HepG2 (cell line): ENCODE measurements at regions of chr11 and their contacts with region 1.

Region 1: GRCh38 chr11:13140028-13140870 is 131.1 kb downstream of the RASSF10 start:
- DNase-seq: peak; percentile 100
- ATAC-seq: peak; percentile 91
- H3K4me3 ChIP-seq: peak overlapping the region in 1 of 3 experiments; percentile 53; a peak in 2 of 6 replicates
- H3K27ac ChIP-seq: peak overlapping the region; percentile 99
- H3K4me1 ChIP-seq: peaks cover 93% of the 10 kb centered on the region
- H3K27me3 ChIP-seq: no peaks in the 10 kb centered on the region
- CTCF ChIP-seq: 0 out of 2 replicates have a peak, but pooled peaks have one; percentile 10
- EP300 ChIP-seq: peak; percentile 67 to 96; a peak in 3 of 4 replicates
- POLR2A ChIP-seq: peak; percentile 76 to 90
- RAD21 ChIP-seq: no peak; the same call in none of the 2 replicates

Region 2: DNA sequence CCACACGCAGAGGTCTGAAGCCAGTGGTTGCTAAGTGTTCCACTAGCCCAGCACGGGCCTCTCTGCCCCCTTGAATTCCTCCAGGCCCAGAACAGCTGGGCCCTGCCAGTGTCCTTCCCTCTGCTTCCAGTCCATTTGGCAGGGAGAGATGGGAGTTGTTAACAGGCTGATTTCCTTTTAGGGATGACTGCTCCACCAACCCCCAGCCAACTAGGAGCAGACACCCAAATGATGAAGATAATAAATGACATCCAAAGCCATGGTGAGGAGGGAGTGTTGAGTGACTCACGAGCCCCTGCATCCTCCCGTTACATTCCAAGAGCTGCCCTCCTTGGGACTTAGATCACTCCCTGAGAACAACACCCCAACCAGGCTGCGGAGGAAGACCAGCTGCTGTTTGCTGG is 742.3 kb before region 1 on chr11:
- CTCF ChIA-PET with region 1: no interaction called
- POLR2A ChIA-PET with region 1: no interaction called
- in situ Hi-C with region 1: no loop called
- intact Hi-C with region 1: no loop called
- DNase-seq: no peak
- ATAC-seq: no peak
- H3K4me3 ChIP-seq: no peak overlapping the region
- H3K27ac ChIP-seq: no peak overlapping the region
- H3K4me1 ChIP-seq: peaks cover 2% of the 10 kb centered on the region; the same call in 1 of the 2 replicates
- H3K27me3 ChIP-seq: no peaks in the 10 kb centered on the region
- CTCF ChIP-seq: no peak
- EP300 ChIP-seq: no peak
- POLR2A ChIP-seq: no peak
- RAD21 ChIP-seq: no peak

Region 3: GRCh38 chr11:13016415-13016814 is 123.8 kb before region 1 on chr11:
- CTCF ChIA-PET with region 1: no interaction called
- POLR2A ChIA-PET with region 1: interaction called, 4 read pairs
- in situ Hi-C with region 1: no loop called
- intact Hi-C with region 1: loop called (anchors 2 kb)
- DNase-seq: no peak
- ATAC-seq: no peak
- H3K4me3 ChIP-seq: no peak overlapping the region
- H3K27ac ChIP-seq: no peak overlapping the region
- H3K4me1 ChIP-seq: peaks cover 32% of the 10 kb centered on the region
- H3K27me3 ChIP-seq: no peaks in the 10 kb centered on the region; a peak in 1 of 5 replicates
- CTCF ChIP-seq: peak; percentile 28; the same call in 1 of the 2 replicates
- EP300 ChIP-seq: no peak
- POLR2A ChIP-seq: no peak
- RAD21 ChIP-seq: no peak

Region 4: GRCh38 chr11:13026722-13027121 is 113.5 kb before region 1 on chr11:
- CTCF ChIA-PET with region 1: no interaction called
- POLR2A ChIA-PET with region 1: no interaction called
- in situ Hi-C with region 1: no loop called
- intact Hi-C with region 1: no loop called
- DNase-seq: no peak
- ATAC-seq: no peak
- H3K4me3 ChIP-seq: no peak overlapping the region
- H3K27ac ChIP-seq: no peak overlapping the region
- H3K4me1 ChIP-seq: peaks cover 15% of the 10 kb centered on the region
- H3K27me3 ChIP-seq: peaks cover 0 to 20% of the 10 kb centered on the region in 2 experiments; a peak in 3 of 5 replicates
- CTCF ChIP-seq: no peak
- EP300 ChIP-seq: no peak
- POLR2A ChIP-seq: no peak
- RAD21 ChIP-seq: no peak

Region 5: DNA sequence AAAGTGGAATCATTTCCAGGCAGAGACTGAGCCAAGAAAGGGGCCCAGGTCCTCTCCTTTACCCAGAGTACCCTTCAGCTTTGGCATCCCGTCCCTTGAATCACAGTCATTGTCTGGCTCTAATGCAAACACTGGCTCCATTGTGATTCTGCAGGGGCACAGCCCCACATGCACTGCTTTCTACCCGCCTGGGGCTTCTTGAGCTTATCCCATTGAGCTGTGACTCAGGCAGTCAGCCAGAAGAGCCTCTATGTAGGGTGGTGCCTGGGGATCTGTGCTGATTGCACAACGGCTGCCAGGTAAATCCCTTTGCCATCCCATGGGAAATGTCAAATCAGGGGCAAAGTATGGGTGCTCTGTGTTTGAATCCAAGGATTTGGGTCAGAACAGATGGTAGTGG is 42.2 kb before region 1 on chr11:
- CTCF ChIA-PET with region 1: no interaction called
- POLR2A ChIA-PET with region 1: no interaction called
- in situ Hi-C with region 1: no loop called
- intact Hi-C with region 1: loop called (anchors 10 kb)
- DNase-seq: peak; percentile 42
- ATAC-seq: peak; percentile 55; the same call in 2 of the 3 replicates
- H3K4me3 ChIP-seq: no peak overlapping the region
- H3K27ac ChIP-seq: no peak overlapping the region
- H3K4me1 ChIP-seq: peaks cover 23% of the 10 kb centered on the region; the same call in 1 of the 2 replicates
- H3K27me3 ChIP-seq: no peaks in the 10 kb centered on the region; a peak in 1 of 5 replicates
- CTCF ChIP-seq: no peak
- EP300 ChIP-seq: no peak
- POLR2A ChIP-seq: no peak
- RAD21 ChIP-seq: no peak

Region 6: GRCh38 chr11:13114566-13115379 is 25.5 kb before region 1 on chr11:
- CTCF ChIA-PET with region 1: no interaction called
- POLR2A ChIA-PET with region 1: interaction called, 25 read pairs
- in situ Hi-C with region 1: no loop called
- intact Hi-C with region 1: loop called (anchors 2 kb)
- DNase-seq: peak; percentile 94
- ATAC-seq: peak; percentile 100
- H3K4me3 ChIP-seq: peak overlapping the region in 2 of 3 experiments; percentile 5 to 47; a peak in 3 of 6 replicates
- H3K27ac ChIP-seq: peak overlapping the region; percentile 73
- H3K4me1 ChIP-seq: peaks cover 62% of the 10 kb centered on the region
- H3K27me3 ChIP-seq: no peaks in the 10 kb centered on the region
- CTCF ChIP-seq: peak; percentile 94
- EP300 ChIP-seq: peak; percentile 16 to 19; a peak in 1 of 4 replicates
- POLR2A ChIP-seq: no peak
- RAD21 ChIP-seq: peak; percentile 73

Region 7: DNA sequence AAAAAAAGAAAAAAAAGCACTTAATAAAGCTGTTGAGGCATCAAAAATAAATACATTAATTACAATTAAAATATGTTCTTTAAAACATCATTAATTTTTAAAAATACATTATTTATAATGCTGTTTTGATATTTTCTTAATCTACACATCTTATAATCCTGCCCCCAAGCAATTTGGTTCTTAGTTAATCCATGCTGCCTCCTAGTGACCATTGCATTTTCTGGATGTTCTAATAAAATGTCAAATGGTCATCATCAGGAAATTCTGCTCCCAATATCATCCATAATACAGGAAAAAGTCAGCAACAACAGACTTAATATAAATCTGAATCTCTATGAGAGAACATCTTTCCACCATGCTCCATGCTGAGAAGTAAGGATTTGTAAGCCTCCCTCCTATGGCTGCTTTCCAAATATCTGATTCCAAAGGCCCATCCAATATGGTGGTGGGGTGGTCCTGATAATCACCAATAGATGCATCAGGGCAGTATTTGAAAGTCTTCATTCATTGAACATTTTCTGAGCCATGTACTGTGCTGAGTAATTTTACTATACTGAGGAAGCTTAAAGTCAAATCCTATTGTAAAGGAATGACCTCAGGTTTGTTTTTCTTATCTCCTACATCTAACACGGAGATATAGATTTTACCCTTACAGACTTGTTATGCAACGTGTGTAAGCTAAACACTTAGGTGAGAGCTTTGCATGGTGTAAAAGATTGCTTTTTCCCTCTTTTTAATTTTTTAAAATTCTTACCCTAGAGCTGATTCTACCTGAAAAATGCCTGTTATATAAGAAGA is 12.7 kb after region 1 on chr11:
- CTCF ChIA-PET with region 1: no interaction called
- POLR2A ChIA-PET with region 1: interaction called, 21 read pairs
- in situ Hi-C with region 1: no loop called
- intact Hi-C with region 1: no loop called
- DNase-seq: peak; percentile 25
- ATAC-seq: no peak
- H3K4me3 ChIP-seq: no peak overlapping the region
- H3K27ac ChIP-seq: no peak overlapping the region
- H3K4me1 ChIP-seq: peaks cover 55% of the 10 kb centered on the region
- H3K27me3 ChIP-seq: no peaks in the 10 kb centered on the region; a peak in 1 of 5 replicates
- CTCF ChIP-seq: peak; percentile 59
- EP300 ChIP-seq: no peak
- POLR2A ChIP-seq: no peak
- RAD21 ChIP-seq: peak; percentile 59

Region 8: GRCh38 chr11:13391217-13391616 is 251.0 kb after region 1 on chr11:
- CTCF ChIA-PET with region 1: no interaction called
- POLR2A ChIA-PET with region 1: no interaction called
- in situ Hi-C with region 1: no loop called
- intact Hi-C with region 1: no loop called
- DNase-seq: no peak
- ATAC-seq: no peak
- H3K4me3 ChIP-seq: no peak overlapping the region
- H3K27ac ChIP-seq: no peak overlapping the region
- H3K4me1 ChIP-seq: peaks cover 7% of the 10 kb centered on the region; the same call in 1 of the 2 replicates
- H3K27me3 ChIP-seq: no peaks in the 10 kb centered on the region
- CTCF ChIP-seq: no peak
- EP300 ChIP-seq: no peak
- POLR2A ChIP-seq: no peak
- RAD21 ChIP-seq: no peak